Gastrocnemius medialis (tissue), 4 donors: ENCODE measurements at regions of chr16 and their contacts with region 1.

Region 1: GRCh38 chr16:50696575-50697420 is 3.4 kb downstream of the NOD2 start:
- DNase-seq: peak; percentile 55 to 74
- ATAC-seq: no peak
- H3K4me3 ChIP-seq: no peak overlapping the region
- H3K27ac ChIP-seq: peak overlapping the region; percentile 81 to 87 (median 85)
- H3K4me1 ChIP-seq: peaks cover 37 to 46% of the 10 kb centered on the region in 2 donors
- H3K27me3 ChIP-seq: no peaks in the 10 kb centered on the region
- CTCF ChIP-seq: no peak
- POLR2A ChIP-seq: peak; percentile 23 to 35

Region 2: GRCh38 chr16:50584033-50584722 is 112.6 kb before region 1 on chr16:
- in situ Hi-C with region 1: no loop called
- intact Hi-C with region 1: no loop called
- DNase-seq: no peak
- ATAC-seq: no peak
- H3K4me3 ChIP-seq: no peak overlapping the region
- H3K27ac ChIP-seq: no peak overlapping the region
- H3K4me1 ChIP-seq: no peaks in the 10 kb centered on the region
- H3K27me3 ChIP-seq: no peaks in the 10 kb centered on the region
- CTCF ChIP-seq: no peak
- POLR2A ChIP-seq: no peak

Region 3: DNA sequence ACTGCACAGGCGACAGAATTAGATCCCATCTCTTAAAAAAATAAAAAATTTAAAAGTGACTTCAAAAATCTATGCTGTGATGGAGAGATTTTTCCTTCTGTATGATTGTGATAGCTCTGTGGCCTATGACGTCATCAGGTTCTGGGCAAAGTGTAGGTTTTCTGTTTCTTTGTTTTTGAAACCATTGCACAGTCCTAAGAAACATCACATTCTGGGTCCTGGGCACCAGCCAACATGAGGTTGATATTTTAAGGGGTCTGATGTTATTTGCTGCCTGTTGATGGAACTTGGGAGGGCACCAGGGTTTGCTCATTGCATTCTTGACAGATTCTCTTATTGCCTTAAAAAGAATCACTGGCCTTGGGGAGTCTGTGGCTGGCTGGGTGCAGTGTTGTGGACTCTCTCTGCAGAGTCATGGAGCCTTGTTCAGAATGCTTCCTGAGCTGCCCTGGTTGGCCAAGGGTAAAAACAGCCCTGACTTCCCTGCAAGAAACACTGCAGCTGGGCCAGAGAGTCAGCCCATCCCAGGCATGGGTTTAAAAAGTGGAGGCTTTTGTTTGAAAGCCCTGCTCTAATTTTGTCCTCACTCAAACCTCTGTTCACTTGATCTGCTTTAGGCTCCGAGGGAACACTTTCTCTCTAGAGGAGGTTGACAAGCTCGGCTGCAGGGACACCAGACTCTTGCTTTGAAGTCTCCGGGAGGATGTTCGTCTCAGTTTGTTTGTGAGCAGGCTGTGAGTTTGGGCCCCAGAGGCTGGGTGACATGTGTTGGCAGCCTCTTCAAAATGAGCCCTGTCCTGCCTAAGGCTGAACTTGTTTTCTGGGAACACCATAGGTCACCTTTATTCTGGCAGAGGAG is 34.6 kb after region 1 on chr16:
- in situ Hi-C with region 1: no loop called
- intact Hi-C with region 1: no loop called
- DNase-seq: no peak
- ATAC-seq: no peak
- H3K4me3 ChIP-seq: no peak overlapping the region
- H3K27ac ChIP-seq: no peak overlapping the region
- H3K4me1 ChIP-seq: peaks cover 0 to 7% of the 10 kb centered on the region in 2 donors
- H3K27me3 ChIP-seq: no peaks in the 10 kb centered on the region
- CTCF ChIP-seq: no peak
- POLR2A ChIP-seq: no peak

Region 4: DNA sequence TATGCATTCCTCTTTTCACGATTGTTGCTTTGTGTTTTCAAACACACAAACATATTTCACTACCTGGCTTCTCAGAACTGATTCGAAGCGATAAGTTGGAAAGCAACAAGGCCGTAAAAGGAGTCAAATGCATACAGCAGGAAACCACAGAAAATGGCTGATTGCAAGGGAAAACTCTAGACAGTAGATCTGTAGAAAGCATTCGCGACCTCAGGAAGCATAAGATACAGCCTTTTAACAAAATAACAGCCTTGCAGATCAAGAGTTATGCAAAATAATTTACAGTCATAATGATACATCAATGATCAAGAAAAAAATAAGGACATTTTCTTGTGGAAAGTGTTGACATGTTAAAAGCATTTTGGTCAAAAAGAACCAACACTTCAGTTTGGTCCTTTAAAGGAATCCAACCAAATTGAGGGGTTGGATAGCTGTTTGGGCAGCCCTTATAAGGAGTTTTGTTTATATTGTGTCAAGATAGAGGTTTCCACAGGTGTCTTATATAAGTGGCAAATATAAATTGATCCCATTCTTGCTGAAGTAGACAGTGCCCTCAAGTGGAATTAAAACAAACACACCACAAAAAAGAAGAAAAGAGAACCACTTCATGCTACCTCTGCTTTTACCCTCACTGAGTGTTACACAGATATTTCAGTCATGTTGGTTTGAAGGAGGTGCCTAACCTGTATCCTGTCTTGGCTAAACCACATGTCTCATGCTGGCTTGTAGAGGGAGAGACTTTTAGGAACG is 50.6 kb after region 1 on chr16:
- in situ Hi-C with region 1: loop called in 1 of 4 experiments (anchors 5 kb)
- intact Hi-C with region 1: no loop called
- DNase-seq: no peak
- ATAC-seq: peak; percentile 34 to 68
- H3K4me3 ChIP-seq: no peak overlapping the region
- H3K27ac ChIP-seq: peak overlapping the region in 3 of 4 donors; percentile 36 to 99 (median 53)
- H3K4me1 ChIP-seq: peaks cover 48 to 69% of the 10 kb centered on the region in 2 donors
- H3K27me3 ChIP-seq: no peaks in the 10 kb centered on the region
- CTCF ChIP-seq: peak in 4 of 5 experiments; percentile 33 to 45 (median 40)
- POLR2A ChIP-seq: no peak

Region 5: DNA sequence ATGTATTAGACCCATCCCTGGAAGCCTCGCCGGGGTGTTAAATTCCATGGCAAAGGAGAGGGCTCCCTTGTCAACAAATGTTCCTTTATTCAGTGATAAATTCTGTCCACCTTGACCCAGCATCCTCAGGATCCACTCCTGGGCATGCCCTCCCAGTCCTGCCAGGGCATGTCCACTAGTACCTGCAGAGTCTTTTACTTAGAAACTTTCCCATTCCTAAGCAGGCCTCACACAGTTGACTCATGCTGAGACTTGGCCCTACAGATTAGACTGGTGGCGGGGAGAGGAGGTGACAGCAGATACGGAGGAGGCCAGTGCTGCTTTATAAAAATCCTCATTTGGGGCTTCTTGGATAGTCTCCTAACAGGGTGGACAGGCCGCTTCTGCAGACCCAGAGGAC is 133.9 kb after region 1 on chr16:
- in situ Hi-C with region 1: no loop called
- intact Hi-C with region 1: no loop called
- DNase-seq: no peak
- ATAC-seq: no peak
- H3K4me3 ChIP-seq: no peak overlapping the region
- H3K27ac ChIP-seq: no peak overlapping the region
- H3K4me1 ChIP-seq: no peaks in the 10 kb centered on the region
- H3K27me3 ChIP-seq: no peaks in the 10 kb centered on the region
- CTCF ChIP-seq: no peak
- POLR2A ChIP-seq: no peak